PC-9 (cell line): ENCODE measurements at regions of chr17 and their contacts with region 1.

Region 1: DNA sequence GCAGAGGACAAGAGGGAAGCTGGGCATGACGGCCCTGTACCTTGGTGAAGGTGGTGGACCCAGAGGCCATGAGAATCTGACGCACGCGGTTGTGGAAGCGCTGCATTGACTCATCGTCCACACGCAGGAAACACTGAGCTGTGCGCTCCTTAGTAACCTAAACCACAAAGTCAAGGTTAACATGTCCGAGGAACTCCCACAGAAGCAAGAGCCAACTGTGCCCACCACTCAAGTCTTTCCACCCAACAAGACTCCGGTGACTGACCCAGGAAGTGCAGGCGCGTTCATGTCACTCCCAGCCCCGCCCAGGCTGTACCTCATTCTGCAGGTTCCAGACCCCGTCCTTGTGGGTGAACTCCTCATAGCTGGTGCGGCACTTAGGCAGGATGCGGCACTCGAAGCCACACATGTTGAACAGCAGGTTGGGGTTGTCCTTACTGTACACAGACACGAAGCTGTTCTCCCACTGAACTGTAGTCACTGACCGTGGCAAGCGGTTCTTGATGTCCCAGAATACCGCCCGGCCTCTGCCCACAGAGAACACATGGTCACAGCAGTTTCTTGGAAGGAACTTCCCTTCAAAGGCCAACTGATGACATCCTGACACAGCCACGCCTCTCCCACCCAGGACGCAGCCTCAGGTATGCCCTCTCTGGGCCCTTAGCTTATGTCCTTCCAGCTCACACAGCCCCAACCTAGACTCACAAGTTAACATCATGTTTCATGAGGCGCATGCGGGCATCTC is 11.5 kb downstream of the PRPF8 start:
- DNase-seq: peak in 1 of 2 experiments; percentile 17
- H3K4me3 ChIP-seq: no peak overlapping the region
- H3K27ac ChIP-seq: no peak overlapping the region
- H3K4me1 ChIP-seq: no peaks in the 10 kb centered on the region
- H3K27me3 ChIP-seq: no peaks in the 10 kb centered on the region
- CTCF ChIP-seq: no peak

Region 2: GRCh38 chr17:1347589-1348323 is 325.5 kb before region 1 on chr17:
- CTCF ChIA-PET with region 1: no interaction called
- POLR2A ChIA-PET with region 1: interaction called, 12 read pairs
- intact Hi-C with region 1: no loop called
- DNase-seq: no peak
- H3K4me3 ChIP-seq: no peak overlapping the region
- H3K27ac ChIP-seq: no peak overlapping the region
- H3K4me1 ChIP-seq: no peaks in the 10 kb centered on the region
- H3K27me3 ChIP-seq: no peaks in the 10 kb centered on the region
- CTCF ChIP-seq: no peak